Heart left ventricle (tissue), 16 donors: ENCODE measurements at regions of chr4 and their contacts with region 1.

Region 1: GRCh38 chr4:101169044-101170014 is 178.0 kb downstream of the PPP3CA start:
- DNase-seq: peak in 4 of 5 donors; percentile 40 to 62 (median 54)
- ATAC-seq: peak; percentile 93 to 97 (median 97)
- H3K4me3 ChIP-seq: no peak overlapping the region
- H3K27ac ChIP-seq: no peak overlapping the region
- H3K4me1 ChIP-seq: peaks cover 0 to 14% (median 0%) of the 10 kb centered on the region in 12 donors
- H3K27me3 ChIP-seq: no peaks in the 10 kb centered on the region
- CTCF ChIP-seq: peak; percentile 64 to 86 (median 78)
- POLR2A ChIP-seq: no peak

Region 2: GRCh38 chr4:101022151-101023024 is 146.9 kb before region 1 on chr4:
- intact Hi-C with region 1: no loop called
- DNase-seq: no peak
- ATAC-seq: no peak
- H3K4me3 ChIP-seq: no peak overlapping the region
- H3K27ac ChIP-seq: no peak overlapping the region
- H3K4me1 ChIP-seq: peaks cover 0 to 30% (median 0%) of the 10 kb centered on the region in 12 donors
- H3K27me3 ChIP-seq: no peaks in the 10 kb centered on the region
- CTCF ChIP-seq: no peak
- POLR2A ChIP-seq: no peak

Region 3: GRCh38 chr4:101288365-101289145 is 119.2 kb after region 1 on chr4:
- intact Hi-C with region 1: no loop called
- DNase-seq: peak in 1 of 5 donors; percentile 11
- ATAC-seq: peak in 2 of 4 donors; percentile 45 to 73
- H3K4me3 ChIP-seq: peak overlapping the region in 1 of 12 donors; percentile 22
- H3K27ac ChIP-seq: peak overlapping the region in 2 of 12 donors; percentile 7 to 27
- H3K4me1 ChIP-seq: peaks cover 2 to 71% (median 44%) of the 10 kb centered on the region in 12 donors
- H3K27me3 ChIP-seq: no peaks in the 10 kb centered on the region
- CTCF ChIP-seq: no peak
- POLR2A ChIP-seq: no peak

Region 4: DNA sequence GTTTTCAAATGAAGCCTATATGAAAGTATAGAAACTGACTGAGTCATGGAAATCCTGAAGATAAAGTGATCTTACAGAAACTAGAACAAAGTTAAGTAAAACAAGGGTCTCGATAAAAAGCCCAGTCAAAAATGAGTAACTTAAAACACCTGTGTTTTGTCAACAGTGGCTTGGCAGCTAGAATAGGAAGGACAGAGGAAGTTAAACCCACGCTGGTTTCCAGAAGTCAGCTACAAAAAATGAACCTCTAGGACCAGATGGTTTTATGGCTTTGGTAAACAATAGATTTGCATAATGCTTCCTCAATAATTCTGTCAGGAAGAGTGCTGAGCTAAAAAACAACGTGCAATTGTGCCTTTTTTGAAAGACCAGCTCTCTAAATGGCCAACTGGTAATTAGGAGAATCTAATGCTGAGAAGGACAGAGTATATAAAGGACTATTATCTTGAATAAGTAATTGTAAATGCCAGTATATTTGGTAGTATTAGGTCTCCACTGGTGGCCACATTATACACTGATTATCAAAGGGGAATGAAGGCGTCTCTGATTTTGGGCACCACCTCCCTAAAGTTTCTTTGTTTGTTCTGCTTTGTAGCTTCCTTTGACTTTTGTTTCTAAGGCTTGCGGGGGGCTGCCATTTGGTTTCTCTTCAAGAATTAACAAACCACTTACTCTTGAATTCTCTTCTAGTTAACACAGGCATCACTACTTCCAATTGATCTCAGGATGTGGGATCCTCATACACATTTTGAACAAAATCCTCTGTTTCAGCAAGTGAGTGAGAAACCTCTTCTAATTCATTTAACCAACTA is 250.2 kb after region 1 on chr4:
- intact Hi-C with region 1: loop called in 1 of 10 experiments (anchors 10 kb)
- DNase-seq: no peak
- ATAC-seq: peak in 3 of 4 donors; percentile 33 to 86 (median 53)
- H3K4me3 ChIP-seq: no peak overlapping the region
- H3K27ac ChIP-seq: peak overlapping the region in 3 of 12 donors; percentile 4 to 60 (median 36)
- H3K4me1 ChIP-seq: peaks cover 0 to 18% (median 0%) of the 10 kb centered on the region in 12 donors
- H3K27me3 ChIP-seq: no peaks in the 10 kb centered on the region
- CTCF ChIP-seq: no peak
- POLR2A ChIP-seq: no peak

Region 5: GRCh38 chr4:101763576-101763975 is 594.2 kb after region 1 on chr4:
- intact Hi-C with region 1: no loop called
- DNase-seq: no peak
- ATAC-seq: no peak
- H3K4me3 ChIP-seq: no peak overlapping the region
- H3K27ac ChIP-seq: no peak overlapping the region
- H3K4me1 ChIP-seq: peaks cover 0 to 7% (median 0%) of the 10 kb centered on the region in 12 donors
- H3K27me3 ChIP-seq: no peaks in the 10 kb centered on the region
- CTCF ChIP-seq: no peak
- POLR2A ChIP-seq: no peak

Region 6: DNA sequence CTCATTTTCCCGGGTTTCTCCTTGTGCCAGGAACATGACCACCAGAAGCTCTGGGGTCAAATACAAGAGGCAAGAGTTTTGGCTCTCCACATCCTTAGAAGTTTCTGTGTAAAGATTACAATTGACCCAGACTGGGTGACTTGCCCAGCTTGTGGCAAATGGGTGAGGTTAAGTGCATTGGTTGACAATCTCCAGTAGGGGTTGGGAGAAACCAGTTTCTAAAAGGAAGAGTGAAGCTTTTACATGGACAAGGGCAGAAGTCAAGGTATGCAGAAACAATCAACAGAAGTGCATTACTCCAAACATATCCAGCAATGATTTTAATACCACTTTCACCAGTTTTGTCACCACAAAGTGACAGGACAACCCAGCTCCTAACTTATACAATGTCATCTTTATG is 1086.1 kb after region 1 on chr4:
- intact Hi-C with region 1: loop called in 1 of 10 experiments (anchors 10 kb)
- DNase-seq: no peak
- ATAC-seq: no peak
- H3K4me3 ChIP-seq: no peak overlapping the region
- H3K27ac ChIP-seq: no peak overlapping the region
- H3K4me1 ChIP-seq: no peaks in the 10 kb centered on the region
- H3K27me3 ChIP-seq: no peaks in the 10 kb centered on the region
- CTCF ChIP-seq: no peak
- POLR2A ChIP-seq: no peak